Activated B cell treated with CpG ODN at 0.5 μM for 24 hours (primary cell): ENCODE measurements at regions of chr20 and their contacts with region 1.

Region 1: DNA sequence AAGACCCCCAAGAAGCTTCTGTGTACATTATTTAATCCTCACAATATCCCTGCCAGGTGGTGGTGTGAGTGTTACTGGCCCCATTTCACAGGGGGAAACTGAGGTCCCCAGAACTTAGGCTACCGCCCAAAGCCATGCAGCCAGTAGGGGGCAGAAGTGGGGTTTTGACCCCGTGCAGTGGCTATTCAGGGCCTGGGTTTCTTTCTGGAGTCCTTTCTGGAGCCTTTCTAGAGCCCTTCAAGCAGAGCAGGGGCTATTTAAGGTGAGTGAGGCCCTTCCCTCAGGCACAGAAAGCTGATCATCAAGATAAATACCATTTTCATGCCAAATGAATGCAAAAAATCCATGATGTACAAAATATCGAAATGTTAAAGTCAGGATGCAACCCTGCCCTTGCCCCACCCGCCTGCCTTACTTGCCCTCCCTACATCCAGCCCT is 59.0 kb downstream of the CTCFL start:
- DNase-seq: no peak
- ATAC-seq: no peak
- H3K4me3 Mint-ChIP-seq: no peak overlapping the region
- H3K27ac Mint-ChIP-seq: no peak overlapping the region
- H3K4me1 Mint-ChIP-seq: peaks cover 31% of the 10 kb centered on the region
- H3K27me3 Mint-ChIP-seq: peaks cover 5% of the 10 kb centered on the region
- CTCF ChIP-seq: no peak

Region 2: DNA sequence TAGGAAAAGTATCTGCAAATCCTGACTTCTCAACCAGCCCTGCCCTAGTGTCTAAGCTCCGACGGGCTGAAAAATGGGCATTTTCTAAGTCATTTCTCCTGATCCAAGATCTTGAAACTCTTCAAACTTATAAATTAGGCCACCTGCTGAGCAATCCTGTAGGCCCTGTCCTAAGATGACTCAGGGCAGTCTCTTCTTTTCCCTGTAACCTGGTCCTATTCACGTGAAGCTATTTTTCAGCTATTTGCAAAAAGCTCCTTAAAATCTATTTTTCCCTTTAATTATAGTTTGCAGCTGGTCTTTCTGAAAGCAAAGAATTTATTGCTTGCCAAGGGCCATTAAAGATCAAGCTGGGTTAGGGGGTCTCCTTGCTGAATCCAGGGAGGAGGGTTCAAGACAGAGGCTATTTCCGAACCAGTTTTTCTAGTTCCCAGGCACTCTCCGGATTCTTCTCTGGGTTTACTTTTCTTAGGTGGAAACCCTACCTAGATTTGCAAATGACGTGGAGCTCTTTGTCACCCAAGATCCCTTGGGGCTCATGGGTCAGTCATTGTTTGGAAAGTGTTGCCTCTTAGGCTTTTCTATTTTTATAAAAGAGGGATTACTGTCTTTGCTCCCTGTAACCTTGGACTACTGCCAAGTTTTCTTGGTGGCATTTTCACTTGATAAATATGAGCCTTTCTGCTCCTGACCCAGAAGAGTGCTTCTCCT is 899.6 kb before region 1 on chr20:
- CTCF ChIA-PET with region 1: no interaction called
- POLR2A ChIA-PET with region 1: no interaction called
- intact Hi-C with region 1: no loop called
- DNase-seq: no peak
- ATAC-seq: no peak
- H3K4me3 Mint-ChIP-seq: no peak overlapping the region
- H3K27ac Mint-ChIP-seq: no peak overlapping the region
- H3K4me1 Mint-ChIP-seq: no peaks in the 10 kb centered on the region
- H3K27me3 Mint-ChIP-seq: peaks cover 11% of the 10 kb centered on the region
- CTCF ChIP-seq: no peak

Region 3: GRCh38 chr20:57480444-57481160 is 14.6 kb after region 1 on chr20:
- CTCF ChIA-PET with region 1: interaction called, 3 read pairs
- POLR2A ChIA-PET with region 1: interaction called, 5 read pairs
- intact Hi-C with region 1: loop called (anchors 2 kb)
- DNase-seq: peak; percentile 64
- ATAC-seq: peak; percentile 69
- H3K4me3 Mint-ChIP-seq: peak overlapping the region; percentile 73
- H3K27ac Mint-ChIP-seq: peak overlapping the region; percentile 81
- H3K4me1 Mint-ChIP-seq: peaks cover 82% of the 10 kb centered on the region
- H3K27me3 Mint-ChIP-seq: no peaks in the 10 kb centered on the region
- CTCF ChIP-seq: no peak